Sciatic nerve (tissue), 2 donors: ENCODE measurements at regions of chr1 and their contacts with region 1.

Region 1: GRCh38 chr1:27536767-27537166 is 46.8 kb upstream of the WASF2 start:
- DNase-seq: peak; percentile 74
- ATAC-seq: peak; percentile 88

Region 2: GRCh38 chr1:26161415-26162219 is 1375.2 kb before region 1 on chr1:
- intact Hi-C with region 1: no loop called
- DNase-seq: no peak
- ATAC-seq: peak; percentile 28

Region 3: GRCh38 chr1:27473755-27474154 is 63.0 kb before region 1 on chr1:
- intact Hi-C with region 1: no loop called
- DNase-seq: no peak
- ATAC-seq: no peak

Region 4: GRCh38 chr1:27496604-27497155 is 40.1 kb before region 1 on chr1:
- intact Hi-C with region 1: loop called (anchors 5 kb)
- DNase-seq: peak; percentile 76
- ATAC-seq: peak; percentile 70

Region 5: GRCh38 chr1:27589841-27590426 is 53.2 kb after region 1 on chr1:
- intact Hi-C with region 1: no loop called
- DNase-seq: no peak
- ATAC-seq: peak; percentile 73